ENCODE measurements at regions of chr12 and their contacts with region 1.

Region 1: DNA sequence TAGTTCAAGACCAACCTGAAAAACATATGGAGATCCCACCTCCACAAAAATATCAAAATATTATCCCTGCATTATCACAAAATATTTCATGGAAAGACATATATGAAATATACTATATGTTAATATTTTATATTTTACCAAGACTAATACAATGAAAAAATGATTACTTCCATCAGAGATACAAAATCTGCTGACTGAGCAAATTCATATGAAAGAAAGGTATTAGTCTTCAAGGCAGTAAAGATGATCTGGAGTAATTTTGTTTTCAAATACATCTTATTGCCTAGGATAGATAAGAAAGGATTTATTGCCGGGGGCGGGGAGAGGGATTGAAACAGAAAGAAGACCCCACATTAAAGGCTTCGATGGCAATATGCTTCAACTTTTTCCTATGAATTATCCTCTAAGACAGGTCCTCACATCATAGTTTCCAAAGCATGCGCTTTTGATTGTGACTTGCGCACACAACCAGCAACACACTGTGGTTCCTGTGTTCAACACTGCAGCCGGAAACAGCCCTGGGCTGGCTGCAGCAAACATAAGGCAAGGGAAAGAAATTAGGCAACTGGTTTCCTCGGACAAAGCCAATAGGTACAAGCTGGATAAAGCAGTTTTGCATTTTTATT is 83.2 kb downstream of the SPPL3 start:
- DNase-seq: peak; percentile 78
- H3K4me3 Mint-ChIP-seq: peak overlapping the region; percentile 13
- H3K27ac Mint-ChIP-seq: peak overlapping the region; percentile 73
- H3K4me1 Mint-ChIP-seq: peaks cover 24% of the 10 kb centered on the region
- H3K27me3 Mint-ChIP-seq: no peaks in the 10 kb centered on the region

Region 2: DNA sequence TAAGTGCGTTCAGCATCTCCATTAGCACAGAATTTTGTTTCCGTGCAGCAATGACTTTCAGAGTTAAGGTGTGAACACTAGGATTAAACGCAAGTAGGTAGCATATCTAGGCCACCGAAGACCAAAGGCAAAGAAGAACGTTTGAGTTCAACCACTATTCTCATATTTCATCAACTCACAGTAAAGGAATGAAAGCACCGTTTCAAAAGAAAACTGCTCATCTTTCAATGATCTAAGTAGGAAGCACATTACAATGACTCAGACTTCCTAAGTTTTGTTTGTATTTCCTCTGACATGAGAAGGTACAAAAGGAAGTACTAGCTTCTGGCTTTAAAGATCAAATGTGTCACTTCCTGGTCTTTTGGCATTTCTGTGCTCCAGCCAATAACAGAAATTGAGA is 37.8 kb before region 1 on chr12:
- intact Hi-C with region 1: loop called (anchors 5 kb)
- DNase-seq: no peak
- H3K4me3 Mint-ChIP-seq: no peak overlapping the region
- H3K27ac Mint-ChIP-seq: peak overlapping the region; percentile 75
- H3K4me1 Mint-ChIP-seq: peaks cover 15% of the 10 kb centered on the region
- H3K27me3 Mint-ChIP-seq: no peaks in the 10 kb centered on the region

Region 3: GRCh38 chr12:120797677-120798642 is 23.0 kb before region 1 on chr12:
- intact Hi-C with region 1: loop called (anchors 1 kb)
- DNase-seq: no peak
- H3K4me3 Mint-ChIP-seq: peak overlapping the region; percentile 29
- H3K27ac Mint-ChIP-seq: peak overlapping the region; percentile 84
- H3K4me1 Mint-ChIP-seq: peaks cover 34% of the 10 kb centered on the region
- H3K27me3 Mint-ChIP-seq: no peaks in the 10 kb centered on the region

Region 4: DNA sequence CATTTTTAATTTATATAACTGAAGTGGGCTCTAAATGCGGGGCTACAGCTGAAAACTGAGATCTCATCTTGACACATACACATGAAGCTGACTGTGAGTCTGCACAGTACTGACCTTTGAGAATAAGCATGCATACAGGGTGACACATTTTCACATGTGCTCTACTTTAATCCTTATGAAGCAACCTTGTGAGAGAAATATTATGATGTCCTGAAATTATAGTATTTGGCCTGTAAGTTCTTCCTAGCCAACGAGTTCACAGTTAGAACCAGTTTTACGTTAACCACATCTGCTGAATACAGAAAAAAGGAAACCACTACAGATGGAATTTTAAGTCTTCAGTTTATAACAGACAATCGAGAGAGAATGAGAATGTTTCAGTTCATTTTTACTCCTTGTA is 12.9 kb after region 1 on chr12:
- intact Hi-C with region 1: loop called (anchors 2 kb)
- DNase-seq: no peak
- H3K4me3 Mint-ChIP-seq: peak overlapping the region; percentile 29
- H3K27ac Mint-ChIP-seq: peak overlapping the region; percentile 59
- H3K4me1 Mint-ChIP-seq: peaks cover 39% of the 10 kb centered on the region
- H3K27me3 Mint-ChIP-seq: no peaks in the 10 kb centered on the region

Measured in activated CD4-positive, alpha-beta T cell treated with anti-CD3 and anti-CD28 coated beads, Interleukin-2, amount 10 ng/mL, durations not matched to agents 24 days and 14 days (primary cell).